H1 (cell line): ENCODE measurements at regions of chrX and their contacts with region 1.

Region 1: DNA sequence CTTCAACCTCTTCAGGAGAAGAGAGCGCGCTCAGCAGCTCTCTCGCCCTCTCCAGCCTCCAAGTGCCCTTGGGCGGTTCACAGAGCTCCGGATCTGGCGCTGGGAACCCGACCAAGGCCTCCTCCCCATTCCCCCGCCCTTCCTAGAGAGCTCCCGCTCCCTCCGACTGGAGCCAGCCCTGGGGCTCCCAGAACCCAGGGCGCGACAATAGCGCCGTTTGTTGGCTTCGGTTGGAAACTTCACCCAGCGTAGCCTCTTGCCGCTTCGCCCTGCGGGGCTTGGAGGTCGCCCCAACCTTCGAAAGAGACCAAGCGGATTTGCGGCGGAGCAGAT is 3.1 kb upstream of the SOX3 start:
- DNase-seq: peak in 1 of 2 experiments; percentile 73
- H3K4me3 ChIP-seq: peak overlapping the region; percentile 25 to 72 (median 39); a peak in 6 of 8 replicates
- H3K27ac ChIP-seq: no peak overlapping the region
- H3K4me1 ChIP-seq: peaks cover 0 to 8% (median 4%) of the 10 kb centered on the region in 4 experiments; a peak in 6 of 7 replicates
- H3K27me3 ChIP-seq: peaks cover 15 to 73% (median 53%) of the 10 kb centered on the region in 4 experiments
- CTCF ChIP-seq: peak in 2 of 3 experiments; percentile 75 to 84; a peak in 3 of 4 replicates
- EP300 ChIP-seq: no peak
- POLR2A ChIP-seq: no peak
- RAD21 ChIP-seq: peak; percentile 86 to 93

Region 2: GRCh38 chrX:140057001-140057411 is 451.0 kb before region 1 on chrX:
- CTCF ChIA-PET with region 1: interaction called, 19 read pairs
- POLR2A ChIA-PET with region 1: no interaction called
- DNase-seq: peak; percentile 63 to 83
- H3K4me3 ChIP-seq: no peak overlapping the region
- H3K27ac ChIP-seq: no peak overlapping the region
- H3K4me1 ChIP-seq: peaks cover 0 to 3% (median 0%) of the 10 kb centered on the region in 4 experiments; a peak in 2 of 7 replicates
- H3K27me3 ChIP-seq: no peaks in the 10 kb centered on the region
- CTCF ChIP-seq: peak; percentile 75 to 82 (median 79)
- EP300 ChIP-seq: no peak
- POLR2A ChIP-seq: no peak
- RAD21 ChIP-seq: peak; percentile 87 to 88

Region 3: GRCh38 chrX:140149761-140150160 is 358.2 kb before region 1 on chrX:
- CTCF ChIA-PET with region 1: interaction called, 28 read pairs
- POLR2A ChIA-PET with region 1: no interaction called
- DNase-seq: no peak
- H3K4me3 ChIP-seq: no peak overlapping the region
- H3K27ac ChIP-seq: no peak overlapping the region
- H3K4me1 ChIP-seq: no peaks in the 10 kb centered on the region
- H3K27me3 ChIP-seq: no peaks in the 10 kb centered on the region
- CTCF ChIP-seq: peak; percentile 10 to 46 (median 41)
- EP300 ChIP-seq: no peak
- POLR2A ChIP-seq: no peak
- RAD21 ChIP-seq: peak; percentile 71 to 80

Region 4: GRCh38 chrX:140467211-140467610 is 40.7 kb before region 1 on chrX:
- CTCF ChIA-PET with region 1: no interaction called
- POLR2A ChIA-PET with region 1: no interaction called
- DNase-seq: no peak
- H3K4me3 ChIP-seq: no peak overlapping the region
- H3K27ac ChIP-seq: no peak overlapping the region
- H3K4me1 ChIP-seq: no peaks in the 10 kb centered on the region
- H3K27me3 ChIP-seq: no peaks in the 10 kb centered on the region
- CTCF ChIP-seq: no peak
- EP300 ChIP-seq: no peak
- POLR2A ChIP-seq: no peak
- RAD21 ChIP-seq: no peak

Region 5: DNA sequence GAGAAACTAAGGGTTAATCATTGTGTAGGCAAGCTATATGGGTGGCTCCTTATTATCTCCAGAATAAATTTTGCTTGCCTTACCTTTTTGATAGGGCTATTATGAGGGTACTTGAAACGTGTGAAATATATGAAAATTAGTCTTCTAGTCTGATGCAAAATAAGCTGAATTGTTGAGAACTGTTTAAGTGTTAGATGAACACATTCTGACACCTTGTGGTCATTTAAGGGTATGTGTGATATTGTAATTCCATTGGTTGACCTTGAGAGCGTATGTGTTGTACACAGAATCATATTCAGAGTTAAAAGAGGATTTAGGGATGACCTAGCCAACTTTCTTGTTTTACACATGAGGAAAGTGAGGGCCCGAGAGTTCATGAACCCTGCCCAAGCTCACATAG is 157.0 kb after region 1 on chrX:
- CTCF ChIA-PET with region 1: interaction called, 10 read pairs
- POLR2A ChIA-PET with region 1: no interaction called
- DNase-seq: no peak
- H3K4me3 ChIP-seq: no peak overlapping the region
- H3K27ac ChIP-seq: no peak overlapping the region
- H3K4me1 ChIP-seq: no peaks in the 10 kb centered on the region; a peak in 1 of 7 replicates
- H3K27me3 ChIP-seq: no peaks in the 10 kb centered on the region
- CTCF ChIP-seq: peak in 2 of 3 experiments; percentile 17 to 36; a peak in 2 of 4 replicates
- EP300 ChIP-seq: no peak
- POLR2A ChIP-seq: no peak
- RAD21 ChIP-seq: peak; percentile 54 to 56